ENCODE measurements at regions of chr7 and their contacts with region 1.

Region 1: GRCh38 chr7:100478966-100479665 is at the start of gene TSC22D4:
- DNase-seq: peak; percentile 94
- H3K4me3 Mint-ChIP-seq: peak within 1 kb of the TSS; percentile 90
- H3K27ac Mint-ChIP-seq: peak within 1 kb of the TSS; percentile 93
- H3K4me1 Mint-ChIP-seq: peaks cover 47% of the 10 kb centered on the region
- H3K27me3 Mint-ChIP-seq: peaks cover 3% of the 10 kb centered on the region

Region 2: DNA sequence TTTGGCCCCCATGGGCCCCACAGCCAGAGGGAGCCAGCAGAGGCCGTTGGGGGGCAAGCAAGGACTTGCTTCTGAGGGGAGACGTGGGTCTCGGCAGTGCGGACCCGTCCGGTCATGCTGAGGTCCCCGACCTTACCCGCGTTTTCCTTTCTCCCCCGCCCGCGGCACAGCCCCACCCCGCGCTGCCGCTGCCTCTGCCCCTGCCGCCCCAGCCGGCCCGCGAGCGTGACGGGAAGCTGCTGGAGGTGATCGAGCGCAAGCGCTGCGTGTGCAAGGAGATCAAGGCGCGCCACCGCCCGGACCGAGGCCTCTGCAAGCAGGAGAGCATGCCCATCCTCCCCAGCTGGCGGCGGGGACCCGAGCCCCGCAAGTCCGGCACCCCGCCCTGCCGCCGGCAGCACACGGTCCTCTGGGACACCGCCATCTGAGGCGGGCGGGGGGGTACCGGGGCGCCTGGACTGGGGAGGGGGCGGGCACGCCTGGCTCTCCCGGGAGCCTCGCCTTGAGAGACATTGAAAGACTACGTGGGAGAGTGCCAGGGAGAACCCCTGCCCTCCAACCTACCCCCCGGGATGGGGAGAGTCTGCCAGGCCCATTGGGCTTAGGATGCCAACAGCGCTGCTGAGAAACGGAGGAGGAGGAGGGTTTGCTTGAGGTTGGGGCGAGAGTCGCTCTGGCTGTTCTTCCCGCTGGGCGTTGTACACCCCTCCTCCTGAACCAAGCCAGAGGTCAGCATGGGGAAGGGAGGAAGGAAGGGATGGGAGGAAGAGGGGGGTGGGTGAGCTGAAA is 14.6 kb after region 1 on chr7:
- CTCF ChIA-PET with region 1: interaction called, 12 read pairs
- DNase-seq: peak; percentile 81
- H3K4me3 Mint-ChIP-seq: peak overlapping the region; percentile 62
- H3K27ac Mint-ChIP-seq: no peak overlapping the region
- H3K4me1 Mint-ChIP-seq: peaks cover 22% of the 10 kb centered on the region
- H3K27me3 Mint-ChIP-seq: peaks cover 82% of the 10 kb centered on the region

Region 3: DNA sequence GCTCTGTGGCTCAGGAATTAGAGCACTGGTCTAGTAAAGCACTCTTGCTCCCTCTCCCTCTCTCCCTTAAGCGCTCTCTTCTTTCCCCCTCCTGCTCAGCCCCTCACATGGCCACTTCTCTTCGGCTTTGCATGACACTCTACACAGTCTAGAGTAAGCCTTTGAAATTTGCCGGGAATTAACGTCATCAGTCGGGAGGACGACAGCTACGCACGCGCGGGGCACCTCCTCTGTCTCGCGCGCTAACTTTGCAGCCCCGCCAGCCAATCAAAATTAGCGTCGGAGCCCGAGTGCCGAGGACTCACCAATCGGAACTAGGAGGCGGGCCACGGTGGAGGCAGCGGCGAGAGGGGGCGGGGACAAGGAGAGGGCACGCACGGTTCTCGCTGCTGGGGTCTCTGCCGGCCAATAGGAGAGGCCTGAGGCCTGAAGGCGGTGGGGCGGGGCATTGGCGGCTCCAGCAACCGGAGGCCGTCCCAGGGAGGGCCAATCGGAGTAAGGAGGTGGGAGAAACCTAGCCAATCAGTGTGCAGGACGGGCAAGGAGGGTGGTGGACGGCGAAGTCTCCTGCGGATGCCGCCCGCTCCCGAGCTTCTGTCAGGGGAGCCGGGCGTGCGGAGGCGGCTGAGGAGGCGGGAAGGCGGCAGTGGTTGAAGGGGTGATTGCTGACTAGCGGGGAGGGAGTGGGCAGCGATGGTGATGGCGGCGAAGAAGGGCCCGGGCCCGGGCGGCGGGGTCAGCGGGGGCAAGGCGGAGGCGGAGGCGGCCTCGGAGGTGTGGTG is 59.7 kb after region 1 on chr7 and contains the start of gene AGFG2:
- CTCF ChIA-PET with region 1: interaction called, 12 read pairs
- DNase-seq: peak; percentile 100
- H3K4me3 Mint-ChIP-seq: peak within 1 kb of the TSS; percentile 98
- H3K27ac Mint-ChIP-seq: peak within 1 kb of the TSS; percentile 84
- H3K4me1 Mint-ChIP-seq: peaks cover 56% of the 10 kb centered on the region
- H3K27me3 Mint-ChIP-seq: peaks cover 4% of the 10 kb centered on the region

Region 4: GRCh38 chr7:100682991-100683658 is 204.0 kb after region 1 on chr7:
- CTCF ChIA-PET with region 1: no interaction called
- DNase-seq: no peak
- H3K4me3 Mint-ChIP-seq: no peak overlapping the region
- H3K27ac Mint-ChIP-seq: peak overlapping the region; percentile 58
- H3K4me1 Mint-ChIP-seq: peaks cover 32% of the 10 kb centered on the region
- H3K27me3 Mint-ChIP-seq: no peaks in the 10 kb centered on the region